ENCODE measurements at regions of chr1 and their contacts with region 1.

Region 1: GRCh38 chr1:206826405-206826804 is 39.0 kb upstream of the IL20 start:
- DNase-seq: peak; percentile 68
- H3K4me3 Mint-ChIP-seq: no peak overlapping the region
- H3K27ac Mint-ChIP-seq: peak overlapping the region; percentile 73
- H3K4me1 Mint-ChIP-seq: peaks cover 14% of the 10 kb centered on the region
- H3K27me3 Mint-ChIP-seq: no peaks in the 10 kb centered on the region
- CTCF ChIP-seq: no peak

Region 2: GRCh38 chr1:206766251-206766856 is 60.1 kb before region 1 on chr1:
- CTCF ChIA-PET with region 1: no interaction called
- POLR2A ChIA-PET with region 1: no interaction called
- intact Hi-C with region 1: no loop called
- DNase-seq: peak; percentile 29
- H3K4me3 Mint-ChIP-seq: no peak overlapping the region
- H3K27ac Mint-ChIP-seq: no peak overlapping the region
- H3K4me1 Mint-ChIP-seq: no peaks in the 10 kb centered on the region
- H3K27me3 Mint-ChIP-seq: peaks cover 32% of the 10 kb centered on the region
- CTCF ChIP-seq: no peak

Region 3: DNA sequence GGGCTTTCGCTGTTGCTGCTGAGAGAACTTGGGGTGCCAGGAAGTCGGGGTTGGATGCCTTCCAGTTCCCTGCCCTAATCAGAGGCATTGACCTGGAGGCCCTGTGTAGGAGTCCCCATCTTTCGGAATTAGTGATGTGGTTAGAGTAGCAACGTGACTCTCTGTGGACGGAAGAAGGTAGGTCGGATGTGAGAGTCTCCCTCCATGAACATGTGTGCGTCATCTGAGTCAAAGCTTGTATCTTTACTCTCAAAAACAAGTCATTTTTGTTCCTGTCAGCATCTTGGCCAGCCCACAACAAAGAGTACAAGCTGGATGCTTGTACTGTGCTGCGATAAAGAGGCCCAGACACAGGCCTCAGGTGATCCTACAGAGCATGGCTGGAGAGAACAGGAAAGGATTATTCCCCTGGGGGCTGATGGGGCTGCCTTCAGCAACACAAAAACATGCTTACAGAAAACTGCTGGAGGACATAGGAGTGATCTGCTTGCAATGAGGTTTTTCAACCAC is 23.1 kb before region 1 on chr1:
- CTCF ChIA-PET with region 1: interaction called, 51 read pairs
- POLR2A ChIA-PET with region 1: interaction called, 11 read pairs
- intact Hi-C with region 1: no loop called
- DNase-seq: no peak
- H3K4me3 Mint-ChIP-seq: no peak overlapping the region
- H3K27ac Mint-ChIP-seq: no peak overlapping the region
- H3K4me1 Mint-ChIP-seq: peaks cover 5% of the 10 kb centered on the region
- H3K27me3 Mint-ChIP-seq: peaks cover 34% of the 10 kb centered on the region
- CTCF ChIP-seq: no peak

Region 4: GRCh38 chr1:206872139-206872538 is 45.7 kb after region 1 on chr1:
- CTCF ChIA-PET with region 1: no interaction called
- POLR2A ChIA-PET with region 1: no interaction called
- intact Hi-C with region 1: no loop called
- DNase-seq: no peak
- H3K4me3 Mint-ChIP-seq: no peak overlapping the region
- H3K27ac Mint-ChIP-seq: no peak overlapping the region
- H3K4me1 Mint-ChIP-seq: peaks cover 24% of the 10 kb centered on the region
- H3K27me3 Mint-ChIP-seq: no peaks in the 10 kb centered on the region
- CTCF ChIP-seq: no peak